Activated CD4-positive, alpha-beta memory T cell treated with anti-CD3 and anti-CD28 coated beads, Interleukin-2, amount 10 ng/mL, durations not matched to agents 7 days and 5 days (primary cell): ENCODE measurements at regions of chr11 and their contacts with region 1.

Region 1: GRCh38 chr11:65261591-65262380 is at the start of gene POLA2:
- DNase-seq: peak; percentile 96
- H3K4me3 Mint-ChIP-seq: peak within 1 kb of the TSS; percentile 95
- H3K27ac Mint-ChIP-seq: peak within 1 kb of the TSS; percentile 92
- H3K4me1 Mint-ChIP-seq: peaks cover 60% of the 10 kb centered on the region
- H3K27me3 Mint-ChIP-seq: no peaks in the 10 kb centered on the region
- total RNA-seq, gene POLA2: 42.0 to 51.1 TPM

Region 2: DNA sequence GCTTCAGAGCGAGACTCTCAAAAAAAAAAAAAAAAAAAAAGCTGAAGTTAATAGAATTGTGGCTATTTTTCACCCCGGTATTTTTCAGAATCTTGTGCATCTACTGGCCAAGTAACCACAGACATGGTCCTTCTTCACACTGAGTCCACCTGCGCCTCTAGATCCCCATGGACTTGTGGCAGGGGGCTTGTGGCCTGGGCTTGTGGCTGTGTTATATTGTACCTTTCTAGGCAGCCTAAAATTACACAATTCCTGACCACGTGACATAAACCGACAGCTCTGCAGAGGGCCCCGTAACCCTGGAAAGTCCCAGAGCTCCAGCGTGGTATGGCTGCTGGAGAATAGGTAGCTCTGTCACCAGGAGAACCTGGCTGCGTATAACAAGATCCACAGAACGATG is 192.6 kb before region 1 on chr11:
- CTCF ChIA-PET with region 1: no interaction called
- POLR2A ChIA-PET with region 1: no interaction called
- DNase-seq: no peak
- H3K4me3 Mint-ChIP-seq: no peak overlapping the region
- H3K27ac Mint-ChIP-seq: no peak overlapping the region
- H3K4me1 Mint-ChIP-seq: no peaks in the 10 kb centered on the region
- H3K27me3 Mint-ChIP-seq: no peaks in the 10 kb centered on the region

Region 3: GRCh38 chr11:65134386-65135253 is 127.2 kb before region 1 on chr11 and contains the start of gene SYVN1:
- CTCF ChIA-PET with region 1: no interaction called
- POLR2A ChIA-PET with region 1: interaction called, 26 read pairs
- DNase-seq: peak; percentile 92
- H3K4me3 Mint-ChIP-seq: peak within 1 kb of the TSS; percentile 98
- H3K27ac Mint-ChIP-seq: peak within 1 kb of the TSS; percentile 98
- H3K4me1 Mint-ChIP-seq: peaks cover 35% of the 10 kb centered on the region
- H3K27me3 Mint-ChIP-seq: no peaks in the 10 kb centered on the region
- total RNA-seq, gene SYVN1: 39.4 to 42.2 TPM

Region 4: DNA sequence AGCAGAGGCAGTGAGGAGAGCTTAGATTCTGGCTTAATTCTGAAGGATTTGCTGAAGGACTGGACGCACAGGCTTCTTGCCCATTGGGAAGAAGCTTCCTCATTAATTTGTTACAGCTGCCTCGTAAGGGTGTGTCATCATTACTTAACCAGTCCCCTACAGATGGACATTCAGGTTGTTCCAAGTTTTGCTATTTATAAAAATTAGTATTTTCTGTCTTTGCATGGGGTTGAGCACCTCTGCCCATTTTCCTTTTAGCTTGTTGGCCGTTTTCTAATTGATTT is 41.9 kb before region 1 on chr11:
- CTCF ChIA-PET with region 1: interaction called, 7 read pairs
- POLR2A ChIA-PET with region 1: interaction called, 10 read pairs
- DNase-seq: no peak
- H3K4me3 Mint-ChIP-seq: no peak overlapping the region
- H3K27ac Mint-ChIP-seq: peak overlapping the region; percentile 26
- H3K4me1 Mint-ChIP-seq: peaks cover 26% of the 10 kb centered on the region
- H3K27me3 Mint-ChIP-seq: peaks cover 7% of the 10 kb centered on the region

Region 5: GRCh38 chr11:65274735-65275682 is 13.2 kb after region 1 on chr11:
- CTCF ChIA-PET with region 1: interaction called, 9 read pairs
- POLR2A ChIA-PET with region 1: interaction called, 22 read pairs
- DNase-seq: peak; percentile 39
- H3K4me3 Mint-ChIP-seq: no peak overlapping the region
- H3K27ac Mint-ChIP-seq: no peak overlapping the region
- H3K4me1 Mint-ChIP-seq: peaks cover 20% of the 10 kb centered on the region
- H3K27me3 Mint-ChIP-seq: no peaks in the 10 kb centered on the region

Region 6: GRCh38 chr11:65329944-65330403 is 68.2 kb after region 1 on chr11:
- CTCF ChIA-PET with region 1: interaction called, 10 read pairs
- POLR2A ChIA-PET with region 1: interaction called, 34 read pairs
- DNase-seq: peak; percentile 82
- H3K4me3 Mint-ChIP-seq: no peak overlapping the region
- H3K27ac Mint-ChIP-seq: no peak overlapping the region
- H3K4me1 Mint-ChIP-seq: peaks cover 14% of the 10 kb centered on the region
- H3K27me3 Mint-ChIP-seq: no peaks in the 10 kb centered on the region